CD8-positive, alpha-beta T cell (primary cell): ENCODE measurements at regions of chr1 and their contacts with region 1.

Region 1: DNA sequence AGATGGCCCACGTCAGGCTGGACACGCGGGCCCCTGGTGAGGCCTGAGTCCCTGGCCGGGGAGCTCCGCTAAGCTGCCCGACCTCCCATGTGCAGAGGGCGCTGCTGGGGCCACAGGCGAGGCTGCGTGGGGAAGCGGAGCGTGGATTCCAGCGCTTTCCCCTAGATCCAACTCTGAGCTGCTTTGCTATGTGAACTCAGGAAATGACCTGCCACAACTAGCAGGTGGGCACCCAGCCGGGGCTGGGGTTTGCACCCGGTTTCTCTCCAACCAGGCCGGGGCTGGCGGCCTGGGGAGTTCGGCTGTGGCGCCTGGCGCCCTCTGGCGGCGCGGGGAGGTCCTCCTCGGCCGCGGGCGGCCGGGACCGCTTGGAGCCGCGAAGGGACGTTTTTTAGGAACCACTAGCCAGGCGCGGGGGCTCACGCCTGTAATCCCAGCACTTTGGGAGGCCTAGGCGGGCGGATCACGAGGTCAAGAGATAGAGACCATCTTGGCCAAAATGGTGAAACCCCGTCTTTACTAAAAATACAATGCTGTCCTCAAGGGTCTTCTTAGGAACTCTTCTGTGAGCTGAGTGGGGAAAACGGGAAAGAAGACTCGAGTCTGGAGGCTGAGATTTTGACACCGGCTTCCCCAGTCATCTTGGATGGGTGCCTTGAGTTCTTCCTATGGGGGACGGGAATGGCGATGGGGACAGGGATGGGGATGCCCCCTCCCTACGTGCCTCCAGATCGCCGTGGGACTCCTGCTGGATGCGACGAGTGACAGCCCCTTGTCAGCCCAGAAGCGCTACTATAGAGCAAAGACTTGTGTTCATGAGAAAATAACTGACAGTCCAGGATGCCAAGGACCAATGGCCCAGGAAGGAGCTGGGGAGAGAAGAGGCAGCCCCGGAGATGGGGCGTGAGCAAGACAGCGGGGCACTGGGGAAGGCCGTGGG is 12.6 kb downstream of the PYCR2 start:
- DNase-seq: peak; percentile 49 to 89 (median 71)
- ATAC-seq: peak; percentile 93
- H3K4me3 ChIP-seq: no peak overlapping the region
- H3K4me3 Mint-ChIP-seq: no peak overlapping the region
- H3K27ac ChIP-seq: no peak overlapping the region
- H3K27ac Mint-ChIP-seq: peak overlapping the region; percentile 71
- H3K4me1 ChIP-seq: peaks cover 32% of the 10 kb centered on the region
- H3K4me1 Mint-ChIP-seq: peaks cover 40% of the 10 kb centered on the region
- H3K27me3 ChIP-seq: no peaks in the 10 kb centered on the region
- H3K27me3 Mint-ChIP-seq: no peaks in the 10 kb centered on the region
- CTCF ChIP-seq: peak; percentile 84

Region 2: DNA sequence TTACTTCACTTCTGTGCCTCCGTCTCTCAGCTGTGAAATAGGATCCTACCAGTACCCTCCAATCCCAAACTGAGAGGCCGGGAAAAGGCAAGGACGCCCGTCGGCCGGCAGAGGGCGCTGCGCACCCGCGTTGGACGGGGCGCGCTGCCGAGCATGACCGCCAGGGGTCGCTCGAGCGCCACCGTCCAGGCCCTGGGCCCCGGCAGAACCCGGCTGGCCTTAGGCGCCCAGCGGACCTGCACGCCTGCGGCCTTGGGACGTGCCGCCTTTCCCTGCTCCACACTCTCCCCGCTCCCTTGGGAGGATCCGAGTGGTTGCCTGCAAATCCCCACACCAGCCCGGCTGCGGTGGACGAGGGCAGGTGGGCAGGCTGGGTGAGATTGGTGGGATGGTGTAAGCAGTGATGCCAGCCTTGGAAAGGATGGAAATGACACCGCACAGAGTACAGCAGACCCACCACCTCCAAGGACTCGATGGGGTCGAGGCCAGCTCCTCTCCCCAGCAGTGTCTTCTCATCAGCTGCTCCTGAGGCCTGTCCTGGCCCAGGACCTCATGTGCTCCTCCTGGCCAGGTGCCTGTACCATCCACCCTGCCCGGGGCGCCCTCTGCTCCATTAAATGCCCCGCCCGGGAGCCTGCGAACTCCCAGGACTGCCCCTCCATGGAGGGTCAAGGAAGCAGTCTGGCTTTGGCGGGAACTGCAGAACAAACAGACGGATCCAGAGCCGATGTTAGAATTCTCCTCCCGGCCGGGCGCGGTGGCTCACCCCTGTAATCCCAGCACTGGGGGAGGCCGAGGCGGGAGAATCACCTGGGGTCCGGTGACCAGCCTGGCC is 436.3 kb before region 1 on chr1:
- CTCF ChIA-PET with region 1: interaction called, 7 read pairs
- POLR2A ChIA-PET with region 1: no interaction called
- intact Hi-C with region 1: loop called (anchors 1 to 2 kb)
- DNase-seq: peak; percentile 44 to 90 (median 70)
- ATAC-seq: peak; percentile 86
- H3K4me3 ChIP-seq: no peak overlapping the region
- H3K4me3 Mint-ChIP-seq: no peak overlapping the region
- H3K27ac ChIP-seq: no peak overlapping the region
- H3K27ac Mint-ChIP-seq: no peak overlapping the region
- H3K4me1 ChIP-seq: peaks cover 53% of the 10 kb centered on the region
- H3K4me1 Mint-ChIP-seq: peaks cover 48% of the 10 kb centered on the region
- H3K27me3 ChIP-seq: no peaks in the 10 kb centered on the region
- H3K27me3 Mint-ChIP-seq: no peaks in the 10 kb centered on the region
- CTCF ChIP-seq: peak; percentile 100

Region 3: DNA sequence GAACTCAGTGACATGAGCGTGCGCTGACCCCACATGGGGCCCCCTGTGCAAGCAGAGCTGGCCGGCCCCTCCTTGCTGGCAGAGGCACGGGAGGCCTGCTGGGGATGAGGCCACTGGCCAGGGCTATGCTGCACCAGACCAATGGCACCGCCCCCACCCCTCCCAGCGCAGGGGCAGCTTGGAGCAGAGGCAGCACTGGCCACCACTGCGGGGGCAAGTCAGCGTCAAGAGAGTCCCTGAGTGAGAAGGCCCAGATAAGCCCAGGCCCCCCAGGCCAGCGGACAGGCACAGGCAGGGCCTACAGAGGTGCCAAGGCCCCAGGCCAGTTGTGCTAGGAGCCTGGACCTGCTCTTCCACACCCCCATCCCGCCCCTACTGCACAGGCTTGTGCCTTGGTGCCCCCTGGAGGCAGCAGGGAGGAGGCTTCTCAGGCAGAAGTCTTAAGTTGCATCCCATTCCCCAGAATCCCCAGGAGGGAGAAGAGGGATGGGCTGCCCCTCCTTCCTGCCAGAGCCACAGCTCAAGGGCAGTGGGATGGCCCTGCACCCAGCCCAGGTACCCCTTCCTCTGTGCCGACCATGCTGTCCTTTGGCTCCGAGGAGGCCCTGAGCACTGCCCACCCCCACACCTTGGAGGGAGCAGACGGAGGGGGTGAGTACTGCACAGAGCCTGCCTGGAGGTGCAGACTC is 65.7 kb before region 1 on chr1:
- CTCF ChIA-PET with region 1: interaction called, 16 read pairs
- POLR2A ChIA-PET with region 1: interaction called, 3 read pairs
- intact Hi-C with region 1: loop called (anchors 5 kb)
- DNase-seq: peak in 5 of 9 experiments; percentile 27 to 51 (median 39)
- ATAC-seq: no peak
- H3K4me3 ChIP-seq: no peak overlapping the region
- H3K4me3 Mint-ChIP-seq: no peak overlapping the region
- H3K27ac ChIP-seq: no peak overlapping the region
- H3K27ac Mint-ChIP-seq: peak overlapping the region; percentile 52
- H3K4me1 ChIP-seq: peaks cover 54% of the 10 kb centered on the region
- H3K4me1 Mint-ChIP-seq: peaks cover 64% of the 10 kb centered on the region
- H3K27me3 ChIP-seq: no peaks in the 10 kb centered on the region
- H3K27me3 Mint-ChIP-seq: no peaks in the 10 kb centered on the region
- CTCF ChIP-seq: peak; percentile 16

Region 4: DNA sequence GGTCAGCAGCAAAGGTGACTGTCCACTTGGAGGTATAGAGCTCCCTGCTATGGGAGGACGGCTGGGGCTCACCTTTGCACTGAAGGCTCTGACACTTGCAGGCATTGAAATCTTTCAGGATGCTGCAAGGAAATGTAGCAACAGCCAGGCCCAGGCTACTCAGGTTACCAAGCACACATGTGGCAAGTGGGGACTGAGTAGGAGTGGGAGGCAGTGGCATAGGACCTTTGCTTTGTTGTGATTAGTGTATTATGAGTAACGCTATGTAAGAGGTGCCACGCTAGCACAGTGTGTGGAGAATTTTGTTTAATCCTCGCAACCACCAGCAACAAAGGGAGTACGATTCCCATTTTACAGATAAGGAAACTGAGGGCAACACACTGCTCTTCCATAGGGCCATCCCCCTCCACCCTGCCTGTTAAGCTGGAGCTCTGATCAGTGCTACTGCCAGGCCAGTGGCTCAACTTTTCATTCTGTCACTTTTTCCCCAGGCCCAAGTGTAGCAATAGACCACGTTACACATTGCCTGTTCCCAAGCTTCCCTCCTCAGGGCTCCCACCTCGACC is 50.5 kb before region 1 on chr1:
- CTCF ChIA-PET with region 1: interaction called, 18 read pairs
- POLR2A ChIA-PET with region 1: interaction called, 5 read pairs
- intact Hi-C with region 1: loop called (anchors 1 kb)
- DNase-seq: no peak
- ATAC-seq: no peak
- H3K4me3 ChIP-seq: no peak overlapping the region
- H3K4me3 Mint-ChIP-seq: no peak overlapping the region
- H3K27ac ChIP-seq: peak overlapping the region in 1 of 2 experiments; percentile 0
- H3K27ac Mint-ChIP-seq: peak overlapping the region; percentile 67
- H3K4me1 ChIP-seq: peaks cover 9% of the 10 kb centered on the region
- H3K4me1 Mint-ChIP-seq: peaks cover 21% of the 10 kb centered on the region
- H3K27me3 ChIP-seq: no peaks in the 10 kb centered on the region
- H3K27me3 Mint-ChIP-seq: no peaks in the 10 kb centered on the region
- CTCF ChIP-seq: no peak

Region 5: DNA sequence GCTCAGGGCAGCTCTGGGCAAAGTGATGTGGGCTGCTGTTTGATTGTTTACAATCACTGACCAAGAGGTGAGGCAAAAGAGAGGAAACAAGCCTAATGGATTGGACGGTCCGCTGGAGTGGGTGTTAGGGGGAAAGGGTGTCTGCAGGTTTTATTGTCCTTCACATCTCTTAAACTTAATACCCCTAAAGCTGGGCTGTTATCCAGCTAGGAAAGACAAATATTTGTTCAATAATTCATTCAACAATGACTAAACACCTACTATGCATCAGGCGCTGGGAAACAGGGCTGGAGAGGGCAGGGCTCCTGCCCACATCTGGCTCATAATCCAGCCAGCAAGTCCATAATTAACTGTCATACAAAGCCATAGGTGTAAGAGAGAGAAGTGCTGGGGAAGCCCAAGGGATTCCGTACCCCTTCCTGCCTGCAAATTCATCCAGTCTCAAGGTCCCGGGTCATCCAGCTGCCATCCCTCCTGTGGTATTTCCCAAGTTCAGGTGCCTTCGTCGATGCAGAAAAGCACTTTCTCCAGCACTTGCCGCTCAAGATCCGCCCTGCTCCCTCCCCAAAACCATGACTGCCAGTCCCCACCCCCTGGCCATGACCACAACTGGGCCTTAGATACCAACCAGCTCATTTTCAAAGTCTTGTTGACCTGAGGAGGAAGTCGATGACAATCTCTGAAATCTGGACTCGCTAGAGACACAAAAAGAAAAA is 39.9 kb before region 1 on chr1:
- CTCF ChIA-PET with region 1: interaction called, 172 read pairs
- POLR2A ChIA-PET with region 1: interaction called, 5 read pairs
- intact Hi-C with region 1: loop called (anchors 1 kb)
- DNase-seq: peak in 1 of 9 experiments; percentile 40
- ATAC-seq: no peak
- H3K4me3 ChIP-seq: no peak overlapping the region
- H3K4me3 Mint-ChIP-seq: no peak overlapping the region
- H3K27ac ChIP-seq: no peak overlapping the region
- H3K27ac Mint-ChIP-seq: peak overlapping the region; percentile 69
- H3K4me1 ChIP-seq: peaks cover 41% of the 10 kb centered on the region
- H3K4me1 Mint-ChIP-seq: peaks cover 66% of the 10 kb centered on the region
- H3K27me3 ChIP-seq: no peaks in the 10 kb centered on the region
- H3K27me3 Mint-ChIP-seq: no peaks in the 10 kb centered on the region
- CTCF ChIP-seq: no peak

Region 6: GRCh38 chr1:225896937-225897549 is 14.4 kb before region 1 on chr1:
- CTCF ChIA-PET with region 1: interaction called, 19 read pairs
- POLR2A ChIA-PET with region 1: interaction called, 36 read pairs
- intact Hi-C with region 1: loop called in 1 of 2 experiments (anchors 2 kb)
- DNase-seq: peak; percentile 46 to 96 (median 71)
- ATAC-seq: peak; percentile 90
- H3K4me3 ChIP-seq: peak overlapping the region; percentile 18 to 38
- H3K4me3 Mint-ChIP-seq: peak overlapping the region; percentile 74
- H3K27ac ChIP-seq: peak overlapping the region; percentile 72 to 80
- H3K27ac Mint-ChIP-seq: peak overlapping the region; percentile 99
- H3K4me1 ChIP-seq: peaks cover 42% of the 10 kb centered on the region
- H3K4me1 Mint-ChIP-seq: peaks cover 56% of the 10 kb centered on the region
- H3K27me3 ChIP-seq: no peaks in the 10 kb centered on the region
- H3K27me3 Mint-ChIP-seq: no peaks in the 10 kb centered on the region
- CTCF ChIP-seq: no peak

Region 7: GRCh38 chr1:225977937-225978748 is 66.7 kb after region 1 on chr1:
- CTCF ChIA-PET with region 1: interaction called, 8 read pairs
- POLR2A ChIA-PET with region 1: no interaction called
- intact Hi-C with region 1: loop called (anchors 5 kb)
- DNase-seq: peak in 3 of 9 experiments; percentile 27 to 45 (median 33)
- ATAC-seq: no peak
- H3K4me3 ChIP-seq: no peak overlapping the region
- H3K4me3 Mint-ChIP-seq: no peak overlapping the region
- H3K27ac ChIP-seq: no peak overlapping the region
- H3K27ac Mint-ChIP-seq: no peak overlapping the region
- H3K4me1 ChIP-seq: no peaks in the 10 kb centered on the region
- H3K4me1 Mint-ChIP-seq: peaks cover 4% of the 10 kb centered on the region
- H3K27me3 ChIP-seq: no peaks in the 10 kb centered on the region
- H3K27me3 Mint-ChIP-seq: no peaks in the 10 kb centered on the region
- CTCF ChIP-seq: no peak